Mucosa of descending colon (tissue), 3 donors: ENCODE measurements at regions of chr15 and their contacts with region 1.

Region 1: GRCh38 chr15:49421991-49422390 is 1.1 kb upstream of the FGF7 start:
- DNase-seq: peak in 2 of 3 donors; percentile 31 to 78
- ATAC-seq: peak; percentile 85
- H3K4me3 ChIP-seq: no peak overlapping the region
- H3K4me1 ChIP-seq: no peaks in the 10 kb centered on the region
- CTCF ChIP-seq: peak; percentile 31

Region 2: DNA sequence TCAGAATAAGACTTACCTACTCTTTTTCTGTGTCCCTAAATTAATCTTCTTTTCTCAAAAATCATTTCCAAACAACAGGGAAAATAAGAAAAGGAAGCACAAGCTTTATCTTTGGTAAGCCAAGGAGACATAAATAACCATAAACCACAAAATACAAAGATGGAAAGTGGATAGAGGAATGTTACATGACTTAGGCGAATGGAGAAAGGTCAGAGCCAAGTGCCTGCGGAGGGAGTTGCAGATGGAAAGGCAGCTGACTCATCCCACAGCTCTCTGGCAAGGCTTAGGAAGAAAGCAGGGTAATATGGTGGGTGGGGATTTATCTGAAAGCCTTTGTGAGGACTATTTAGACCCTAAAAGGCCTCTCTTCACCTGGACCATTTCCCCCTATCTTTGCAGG is 179.2 kb before region 1 on chr15:
- intact Hi-C with region 1: loop called (anchors 5 to 10 kb)
- DNase-seq: no peak
- ATAC-seq: no peak
- H3K4me3 ChIP-seq: no peak overlapping the region
- H3K4me1 ChIP-seq: no peaks in the 10 kb centered on the region
- CTCF ChIP-seq: no peak

Region 3: DNA sequence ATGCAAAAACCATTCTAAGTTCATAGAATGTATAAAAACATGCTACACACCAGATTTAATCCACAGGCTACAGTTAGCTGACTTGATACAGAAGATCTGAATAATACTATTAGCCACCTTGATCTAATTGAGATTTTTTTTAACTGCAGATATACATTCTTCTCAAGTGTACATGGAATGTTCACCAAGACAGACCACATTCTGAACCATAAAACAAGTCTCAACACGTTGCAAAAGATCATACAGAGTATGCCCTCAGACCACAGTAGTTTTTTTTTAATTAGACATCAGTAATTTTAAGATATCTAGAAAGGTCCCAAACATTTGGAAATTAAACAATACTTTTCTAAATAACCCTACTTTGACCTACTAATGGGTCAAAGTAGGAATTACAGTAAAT is 84.3 kb after region 1 on chr15:
- intact Hi-C with region 1: no loop called
- DNase-seq: no peak
- ATAC-seq: no peak
- H3K4me3 ChIP-seq: no peak overlapping the region
- H3K4me1 ChIP-seq: no peaks in the 10 kb centered on the region
- CTCF ChIP-seq: no peak

Region 4: DNA sequence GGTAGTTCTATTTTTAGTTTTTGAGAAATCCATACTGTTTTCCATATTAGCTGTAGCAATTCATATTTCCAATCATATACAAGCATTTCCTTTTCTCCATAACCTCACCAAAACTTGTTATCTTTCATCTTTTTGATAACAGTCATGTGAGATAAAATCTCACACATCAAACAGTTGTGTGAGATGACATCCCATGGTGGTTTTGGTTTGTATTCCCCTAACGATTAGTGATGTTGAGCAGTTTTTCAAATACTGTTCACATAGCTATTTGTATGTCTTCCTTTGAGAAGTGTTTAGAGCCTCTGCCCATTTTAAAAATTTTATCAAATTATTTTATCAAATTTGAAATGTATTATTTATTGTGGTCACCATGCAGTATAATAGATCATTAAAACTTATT is 148.2 kb after region 1 on chr15:
- intact Hi-C with region 1: no loop called
- DNase-seq: no peak
- ATAC-seq: no peak
- H3K4me3 ChIP-seq: no peak overlapping the region
- H3K4me1 ChIP-seq: no peaks in the 10 kb centered on the region
- CTCF ChIP-seq: no peak